Mammary epithelial cell (primary cell): ENCODE measurements at regions of chr2 and their contacts with region 1.

Region 1: GRCh38 chr2:99337113-99338028 is at the start of gene EIF5B:
- DNase-seq: peak; percentile 94
- H3K4me3 ChIP-seq: peak within 1 kb of the TSS; percentile 69 to 93 (median 86)
- H3K27ac ChIP-seq: peak within 1 kb of the TSS; percentile 87
- H3K4me1 ChIP-seq: peaks cover 27% of the 10 kb centered on the region
- H3K27me3 ChIP-seq: no peaks in the 10 kb centered on the region
- CTCF ChIP-seq: peak; percentile 17 to 75
- total RNA-seq, gene EIF5B: 19.5 to 64.1 TPM

Region 2: DNA sequence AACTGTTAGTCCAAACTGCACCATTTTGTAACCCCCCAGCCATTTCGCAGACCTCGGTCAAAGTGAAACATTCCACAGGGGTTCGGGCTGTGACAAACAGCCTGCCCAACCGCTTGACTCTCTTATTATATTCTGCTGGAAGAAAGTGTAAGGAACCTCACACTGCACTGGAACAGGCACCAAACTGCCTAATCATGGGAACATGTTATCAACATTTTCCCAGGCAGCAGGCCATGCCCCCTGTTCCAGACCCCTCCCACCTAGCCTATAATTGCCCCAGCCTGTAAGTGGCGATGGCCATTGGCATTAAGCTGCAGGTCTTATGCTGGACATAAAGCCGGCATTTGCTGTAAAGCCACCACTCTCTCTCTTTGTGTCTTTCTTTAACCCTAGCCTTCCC is 98.8 kb before region 1 on chr2:
- CTCF ChIA-PET with region 1: no interaction called
- dilution Hi-C with region 1: no loop called
- in situ Hi-C with region 1: no loop called
- intact Hi-C with region 1: loop called (anchors 1 kb)
- DNase-seq: no peak
- H3K4me3 ChIP-seq: no peak overlapping the region
- H3K27ac ChIP-seq: no peak overlapping the region
- H3K4me1 ChIP-seq: no peaks in the 10 kb centered on the region
- H3K27me3 ChIP-seq: no peaks in the 10 kb centered on the region
- CTCF ChIP-seq: no peak